ENCODE measurements at regions of chr19 and their contacts with region 1.

Region 1: GRCh38 chr19:48872182-48872883 is at the start of gene PPP1R15A:
- DNase-seq: peak; percentile 99
- ATAC-seq: peak; percentile 48
- H3K4me3 Mint-ChIP-seq: peak within 1 kb of the TSS; percentile 99
- H3K27ac Mint-ChIP-seq: peak within 1 kb of the TSS; percentile 100
- H3K4me1 Mint-ChIP-seq: peaks cover 40% of the 10 kb centered on the region
- H3K27me3 Mint-ChIP-seq: peaks cover 2% of the 10 kb centered on the region
- CTCF ChIP-seq: no peak
- total RNA-seq, gene PPP1R15A: 77.8 to 81.2 TPM

Region 2: DNA sequence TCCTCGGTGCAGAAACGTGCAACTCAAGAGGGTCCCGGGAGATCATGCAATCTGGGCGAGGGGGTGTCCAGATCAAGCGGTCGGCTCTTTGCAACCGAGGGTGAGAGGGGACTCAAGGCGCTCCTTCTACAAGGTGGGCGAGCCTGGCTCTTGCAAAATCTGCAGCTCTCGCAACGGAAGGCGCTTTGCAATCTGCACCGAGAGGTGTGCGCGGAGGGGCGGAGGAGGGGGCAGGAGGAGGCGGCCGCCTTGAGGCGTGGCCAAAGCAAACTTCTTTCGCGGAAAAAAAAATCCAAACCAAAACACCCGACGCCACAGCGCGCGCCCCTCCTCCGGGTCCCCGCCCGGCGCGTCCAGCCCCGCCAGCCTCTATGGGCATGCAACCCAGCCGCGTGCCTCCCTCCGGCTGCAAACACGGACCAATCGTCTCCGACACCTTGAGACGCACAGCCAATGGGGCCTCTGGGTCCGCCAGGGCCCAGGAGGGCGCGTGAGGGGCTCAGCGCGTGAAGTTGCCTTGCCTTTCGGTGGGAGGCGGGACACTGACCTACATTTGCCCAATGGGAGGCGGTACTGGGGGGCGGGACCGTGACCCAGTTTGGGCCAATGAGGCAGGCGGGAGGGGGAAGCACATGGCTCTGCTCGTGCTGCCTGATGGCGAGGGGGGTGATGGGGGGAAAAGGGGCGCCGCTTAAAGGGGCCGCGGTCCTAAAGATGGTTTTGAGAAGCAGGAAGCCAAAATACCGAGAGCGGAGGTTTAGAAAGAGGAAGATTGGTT is 235.0 kb before region 1 on chr19 and contains the start of gene DBP:
- CTCF ChIA-PET with region 1: no interaction called
- POLR2A ChIA-PET with region 1: no interaction called
- intact Hi-C with region 1: loop called (anchors 10 kb)
- DNase-seq: peak; percentile 100
- ATAC-seq: peak; percentile 76
- H3K4me3 Mint-ChIP-seq: peak within 1 kb of the TSS; percentile 88
- H3K27ac Mint-ChIP-seq: peak within 1 kb of the TSS; percentile 98
- H3K4me1 Mint-ChIP-seq: peaks cover 55% of the 10 kb centered on the region
- H3K27me3 Mint-ChIP-seq: no peaks in the 10 kb centered on the region
- CTCF ChIP-seq: peak; percentile 17
- total RNA-seq, gene DBP: 10.8 to 13.1 TPM

Region 3: GRCh38 chr19:48772503-48772953 is 99.8 kb before region 1 on chr19:
- CTCF ChIA-PET with region 1: no interaction called
- POLR2A ChIA-PET with region 1: no interaction called
- intact Hi-C with region 1: no loop called
- DNase-seq: no peak
- ATAC-seq: no peak
- H3K4me3 Mint-ChIP-seq: no peak overlapping the region
- H3K27ac Mint-ChIP-seq: no peak overlapping the region
- H3K4me1 Mint-ChIP-seq: no peaks in the 10 kb centered on the region
- H3K27me3 Mint-ChIP-seq: peaks cover 10% of the 10 kb centered on the region
- CTCF ChIP-seq: no peak

Region 4: GRCh38 chr19:48819366-48819816 is 52.9 kb before region 1 on chr19:
- CTCF ChIA-PET with region 1: no interaction called
- POLR2A ChIA-PET with region 1: no interaction called
- intact Hi-C with region 1: no loop called
- DNase-seq: no peak
- ATAC-seq: no peak
- H3K4me3 Mint-ChIP-seq: no peak overlapping the region
- H3K27ac Mint-ChIP-seq: no peak overlapping the region
- H3K4me1 Mint-ChIP-seq: peaks cover 2% of the 10 kb centered on the region
- H3K27me3 Mint-ChIP-seq: no peaks in the 10 kb centered on the region
- CTCF ChIP-seq: no peak

Region 5: DNA sequence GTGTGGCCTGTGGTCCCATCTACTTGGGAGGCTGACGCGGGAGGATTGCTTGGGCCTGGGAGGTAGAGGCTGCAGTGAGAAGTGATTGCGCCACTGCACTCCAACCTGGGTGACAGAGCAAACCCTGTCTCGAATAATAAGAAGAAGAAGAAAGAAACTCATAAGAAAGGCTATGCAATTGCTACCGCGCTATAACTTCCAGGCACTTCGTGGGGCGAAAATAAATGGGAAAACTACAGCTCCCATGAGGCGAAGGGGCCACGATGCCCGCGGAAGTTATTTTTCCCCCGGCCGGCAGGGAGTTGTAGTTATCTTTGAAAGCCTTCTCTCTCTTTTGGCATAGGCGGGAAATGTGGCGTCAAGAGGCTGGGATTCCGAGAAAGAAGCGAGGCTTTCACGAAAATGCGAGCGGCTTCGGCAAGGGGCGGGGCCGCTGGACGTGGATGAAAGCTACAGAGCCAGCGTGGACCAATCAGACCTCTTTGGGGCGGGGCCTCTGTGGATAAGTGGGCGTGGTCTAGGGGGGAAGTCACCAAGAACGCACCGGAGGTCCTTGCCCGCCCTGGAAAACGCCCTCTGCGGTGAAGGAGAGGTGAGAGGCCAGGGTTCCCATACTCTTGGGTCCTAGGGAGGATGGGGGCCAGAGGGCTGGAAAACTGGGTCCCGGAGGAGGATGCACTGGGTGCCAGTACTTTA is 27.6 kb after region 1 on chr19 and contains the start of gene NUCB1:
- CTCF ChIA-PET with region 1: interaction called, 4 read pairs
- POLR2A ChIA-PET with region 1: interaction called, 27 read pairs
- intact Hi-C with region 1: no loop called
- DNase-seq: peak; percentile 100
- ATAC-seq: peak; percentile 93
- H3K4me3 Mint-ChIP-seq: peak within 1 kb of the TSS; percentile 95
- H3K27ac Mint-ChIP-seq: peak within 1 kb of the TSS; percentile 96
- H3K4me1 Mint-ChIP-seq: peaks cover 30% of the 10 kb centered on the region
- H3K27me3 Mint-ChIP-seq: peaks cover 7% of the 10 kb centered on the region
- CTCF ChIP-seq: no peak
- total RNA-seq, gene NUCB1: 102 to 114 TPM

Region 6: DNA sequence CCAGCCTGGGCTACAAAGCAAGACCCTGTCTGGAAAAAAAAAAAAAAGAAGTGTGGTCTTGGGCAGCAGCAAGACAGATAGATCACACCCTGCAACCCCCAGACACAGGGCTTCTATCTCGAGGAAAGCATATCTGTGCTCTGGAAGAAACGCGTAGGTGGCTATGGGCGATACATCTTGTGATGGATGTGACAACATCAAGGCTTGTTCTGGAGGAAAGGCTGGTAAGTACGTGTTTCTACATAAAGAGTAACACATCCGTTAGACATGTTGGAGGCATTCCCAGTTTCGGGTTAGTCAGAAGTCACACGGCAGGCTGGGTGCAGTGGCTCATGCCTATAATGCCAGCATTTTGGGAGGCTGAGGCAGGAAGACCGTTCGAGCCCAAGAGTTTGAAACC is 54.6 kb after region 1 on chr19:
- CTCF ChIA-PET with region 1: no interaction called
- POLR2A ChIA-PET with region 1: no interaction called
- intact Hi-C with region 1: no loop called
- DNase-seq: peak; percentile 35
- ATAC-seq: peak; percentile 74
- H3K4me3 Mint-ChIP-seq: no peak overlapping the region
- H3K27ac Mint-ChIP-seq: peak overlapping the region; percentile 11
- H3K4me1 Mint-ChIP-seq: peaks cover 5% of the 10 kb centered on the region
- H3K27me3 Mint-ChIP-seq: no peaks in the 10 kb centered on the region
- CTCF ChIP-seq: no peak

Region 7: GRCh38 chr19:48965040-48965805 is 92.9 kb after region 1 on chr19 and contains the start of gene FTL:
- CTCF ChIA-PET with region 1: interaction called, 18 read pairs
- POLR2A ChIA-PET with region 1: interaction called, 53 read pairs
- intact Hi-C with region 1: loop called (anchors 10 kb)
- DNase-seq: peak; percentile 96
- ATAC-seq: peak; percentile 68
- H3K4me3 Mint-ChIP-seq: peak within 1 kb of the TSS; percentile 98
- H3K27ac Mint-ChIP-seq: peak within 1 kb of the TSS; percentile 100
- H3K4me1 Mint-ChIP-seq: peaks cover 51% of the 10 kb centered on the region
- H3K27me3 Mint-ChIP-seq: no peaks in the 10 kb centered on the region
- CTCF ChIP-seq: no peak
- total RNA-seq, gene FTL: 1,296 to 1,324 TPM

Measured in activated CD8-positive, alpha-beta T cell treated with anti-CD3 and anti-CD28 coated beads for 36 hours (primary cell).